Posterior vena cava (tissue), 2 donors: ENCODE measurements at regions of chr1 and their contacts with region 1.

Region 1: GRCh38 chr1:212477014-212477679 is 44.4 kb downstream of the NENF start:
- DNase-seq: peak; percentile 89

Region 2: DNA sequence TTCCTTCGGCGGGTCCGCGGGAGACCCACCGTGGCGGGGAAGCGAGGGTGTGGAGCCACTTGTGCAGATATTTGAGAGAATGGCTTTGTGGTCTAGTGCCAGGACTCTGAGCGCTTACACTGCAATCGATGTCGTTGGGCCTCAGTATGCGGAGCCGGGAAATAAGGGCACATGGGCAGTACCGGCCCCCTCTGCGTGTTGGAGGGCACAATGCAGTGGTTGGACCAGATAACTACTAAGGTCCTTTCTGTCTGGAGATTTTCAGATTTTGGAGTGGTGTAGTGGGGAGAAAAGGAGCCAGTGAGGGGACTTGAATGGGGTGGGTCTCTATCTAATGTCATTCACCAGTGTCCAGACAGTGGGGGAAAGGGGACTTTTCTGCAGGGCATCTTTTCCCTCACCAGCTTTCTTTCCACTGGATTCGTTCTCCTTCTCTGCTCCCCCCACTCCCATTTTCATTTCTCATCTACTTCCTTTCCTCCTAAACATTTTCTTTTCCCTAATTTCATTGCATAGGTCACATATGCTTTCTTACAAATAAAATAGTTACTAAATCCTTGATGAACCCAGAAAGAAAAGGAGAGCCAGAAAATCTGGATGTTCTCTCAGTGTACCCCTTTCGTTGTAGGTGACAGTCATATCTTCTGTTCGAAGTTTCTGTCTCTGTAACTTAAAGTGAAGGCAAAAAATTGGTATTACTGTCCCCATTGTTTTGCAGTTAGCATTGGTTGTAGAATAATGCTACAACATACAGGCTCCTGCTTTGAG is 132.7 kb after region 1 on chr1:
- intact Hi-C with region 1: loop called in 1 of 2 experiments (anchors 5 kb)
- DNase-seq: no peak

Region 3: DNA sequence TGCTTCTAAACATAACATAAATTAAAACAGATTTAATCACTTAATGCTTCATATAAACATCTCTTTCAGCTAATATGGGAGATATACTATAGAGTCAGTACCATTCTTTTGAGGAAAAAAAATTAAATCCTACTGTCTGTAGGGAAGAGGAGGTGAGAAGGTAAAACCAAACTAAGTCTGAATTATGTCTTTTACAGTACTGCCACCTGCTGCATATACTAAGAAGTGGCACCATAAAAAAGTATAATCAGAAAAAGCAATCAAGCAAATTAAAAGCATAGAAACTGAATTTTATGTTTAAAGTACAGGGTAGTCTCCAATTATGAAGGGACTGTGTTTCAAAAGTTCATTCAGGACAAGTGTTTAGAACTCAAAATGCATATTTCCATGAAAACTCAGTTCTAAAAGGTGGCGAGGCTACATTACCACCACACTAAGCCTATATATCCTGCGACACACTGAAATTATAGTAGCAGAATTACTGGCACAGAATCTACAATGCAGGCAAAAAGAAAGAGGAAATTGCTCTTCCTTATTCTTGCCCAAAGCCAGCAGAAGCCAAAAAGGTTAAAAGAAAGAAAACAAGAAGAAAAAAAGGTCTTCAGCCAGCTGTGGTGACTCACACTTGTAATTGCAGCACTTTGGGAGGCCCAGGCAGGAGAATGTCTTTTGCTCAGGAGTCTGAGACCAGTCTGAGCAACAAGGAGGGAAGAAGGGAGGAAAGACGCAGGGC is 305.4 kb after region 1 on chr1:
- intact Hi-C with region 1: loop called in 1 of 2 experiments (anchors 10 kb)
- DNase-seq: no peak